ENCODE measurements at regions of chr2 and their contacts with region 1.

Region 1: DNA sequence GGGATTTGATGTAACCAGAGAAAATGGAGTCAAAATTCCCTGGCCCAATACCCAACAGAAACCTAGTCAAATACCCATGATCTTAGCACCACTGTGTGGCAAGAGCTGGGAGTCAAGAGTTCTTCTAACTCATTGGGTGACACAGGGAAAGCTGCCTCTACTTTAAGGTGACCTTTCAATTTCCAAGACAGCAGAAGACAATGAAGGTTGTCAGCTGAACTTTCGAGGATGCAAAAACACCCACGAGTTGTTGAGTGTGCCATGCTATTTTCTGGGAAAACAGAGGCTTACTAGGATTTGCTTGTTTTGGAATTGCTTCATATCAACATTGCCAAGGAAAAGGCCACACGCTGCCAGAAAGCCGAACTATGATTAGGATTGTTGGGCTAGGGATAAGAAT is 61.6 kb upstream of the CYRIA start:
- DNase-seq: peak in 1 of 10 donors; percentile 48
- H3K4me3 ChIP-seq: no peak overlapping the region
- H3K27ac ChIP-seq: peak overlapping the region in 9 of 59 donors; percentile 3 to 51 (median 27)
- H3K27me3 ChIP-seq: no peaks in the 10 kb centered on the region
- CTCF ChIP-seq: peak in 53 of 56 donors; percentile 22 to 75 (median 49)

Region 2: DNA sequence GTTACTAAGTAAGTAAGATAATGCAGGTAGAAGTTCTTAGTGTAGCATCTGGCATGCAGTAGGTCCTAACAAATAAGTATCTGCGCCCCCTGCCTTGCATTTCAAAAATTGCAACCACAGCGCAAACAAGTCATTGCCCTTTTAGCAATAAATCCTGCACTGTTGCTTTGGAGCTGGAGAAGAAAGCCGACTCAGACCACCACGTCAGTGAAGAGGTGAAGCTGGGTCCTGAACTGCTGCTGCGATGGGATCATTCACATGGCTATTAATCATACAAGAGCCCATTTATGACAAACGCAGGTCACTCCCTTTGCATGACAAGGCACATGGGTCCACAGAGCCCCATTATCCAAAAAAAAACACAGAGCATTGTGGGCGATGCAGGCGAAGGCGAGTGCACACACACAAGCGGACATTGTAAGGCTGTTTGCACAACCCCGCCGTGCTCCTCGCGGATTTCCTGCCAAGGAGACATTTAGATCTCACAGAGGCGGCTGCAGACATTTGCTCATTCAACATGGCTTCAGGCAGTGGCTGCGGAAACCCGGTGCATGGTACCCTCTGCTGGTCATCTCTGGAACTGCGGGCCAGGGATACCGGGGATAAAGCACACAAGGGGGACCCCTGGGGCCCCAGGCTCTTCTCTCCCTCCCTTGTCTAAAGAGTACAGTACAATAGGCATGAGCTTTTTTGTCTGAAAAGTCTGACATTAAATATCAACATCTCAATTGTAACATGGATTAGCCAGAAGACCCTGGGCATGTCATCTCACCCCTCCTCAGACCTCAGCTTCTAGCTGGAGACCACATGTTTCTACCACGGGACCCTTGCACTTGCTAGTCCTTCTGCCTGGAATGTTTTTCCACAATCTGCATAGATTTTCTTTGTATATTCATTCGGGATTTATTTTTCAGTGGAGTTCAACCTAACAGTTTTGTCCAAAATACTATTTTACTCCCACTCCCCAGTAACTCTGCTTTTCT is 118.3 kb before region 1 on chr2:
- intact Hi-C with region 1: loop called (anchors 2 kb)
- DNase-seq: peak; percentile 81 to 93 (median 90)
- H3K4me3 ChIP-seq: peak overlapping the region; percentile 32 to 74 (median 54)
- H3K27ac ChIP-seq: peak overlapping the region; percentile 18 to 91 (median 83)
- H3K27me3 ChIP-seq: no peaks in the 10 kb centered on the region
- CTCF ChIP-seq: peak; percentile 81 to 99 (median 93)

Region 3: DNA sequence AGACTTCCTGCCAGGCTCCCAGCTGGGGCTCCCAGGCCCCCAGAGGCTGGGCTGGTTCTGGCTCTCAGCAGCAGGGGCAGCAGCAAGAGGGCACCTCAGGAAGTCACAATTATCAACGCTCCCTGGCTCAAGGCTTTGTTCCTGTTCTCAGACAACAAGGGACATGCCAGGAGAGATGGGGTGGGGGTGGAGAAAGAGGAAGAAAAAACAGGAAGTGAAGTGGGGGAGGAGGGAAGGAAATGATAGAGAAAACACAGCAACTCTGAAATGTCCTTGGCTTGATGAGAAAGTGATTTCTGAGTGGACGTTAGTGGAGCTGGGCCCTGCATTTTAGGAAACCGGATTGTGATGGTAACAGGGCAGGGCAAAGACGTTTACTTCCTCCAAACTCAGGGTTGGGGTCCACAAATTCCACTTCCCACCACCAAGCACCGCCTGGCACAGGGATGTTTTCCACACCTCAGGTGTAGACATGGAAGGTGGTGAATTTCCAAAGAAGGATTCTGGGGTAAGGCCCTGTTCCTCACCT is 102.0 kb before region 1 on chr2:
- intact Hi-C with region 1: loop called in 1 of 2 experiments (anchors 5 kb)
- DNase-seq: no peak
- H3K4me3 ChIP-seq: no peak overlapping the region
- H3K27ac ChIP-seq: peak overlapping the region in 56 of 59 donors; percentile 8 to 84 (median 69)
- H3K27me3 ChIP-seq: no peaks in the 10 kb centered on the region
- CTCF ChIP-seq: no peak

Region 4: DNA sequence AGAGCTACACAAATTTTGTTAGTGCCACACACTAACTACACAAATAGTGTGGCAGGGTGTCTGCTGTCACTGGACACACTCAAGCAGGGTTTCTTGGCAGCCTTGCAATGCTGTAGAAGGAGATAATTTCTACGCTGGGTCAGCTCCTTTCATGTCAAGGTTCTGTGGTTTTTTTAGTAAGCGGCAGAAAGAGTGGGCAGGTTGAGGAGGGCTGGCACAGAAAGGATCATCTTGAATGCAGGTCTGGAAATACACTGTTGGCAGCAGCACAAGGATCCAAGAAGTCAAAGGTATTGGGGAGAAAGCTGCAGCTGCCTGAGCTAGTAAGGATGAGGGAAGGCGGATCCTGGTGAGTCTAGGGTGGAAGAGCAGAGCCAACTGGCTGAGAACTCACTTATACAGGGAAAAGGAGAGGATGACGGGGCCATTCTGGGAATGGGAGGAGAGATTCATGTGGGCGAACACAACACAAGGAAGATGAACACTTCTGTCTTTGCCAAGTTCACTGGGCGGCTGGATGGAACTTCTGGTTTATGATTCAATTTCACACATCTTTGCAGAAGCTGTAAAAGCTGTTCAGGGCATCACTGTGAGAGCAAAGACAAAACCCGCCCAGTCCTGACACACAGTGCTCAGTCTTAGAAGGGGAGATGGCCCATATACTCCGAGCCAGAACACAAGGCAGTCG is 44.7 kb before region 1 on chr2:
- intact Hi-C with region 1: loop called in 1 of 2 experiments (anchors 5 kb)
- DNase-seq: peak in 5 of 10 donors; percentile 35 to 81 (median 64)
- H3K4me3 ChIP-seq: no peak overlapping the region
- H3K27ac ChIP-seq: peak overlapping the region in 18 of 59 donors; percentile 4 to 77 (median 44)
- H3K27me3 ChIP-seq: no peaks in the 10 kb centered on the region
- CTCF ChIP-seq: no peak

Region 5: GRCh38 chr2:16798472-16798871 is 71.2 kb after region 1 on chr2:
- intact Hi-C with region 1: no loop called
- DNase-seq: no peak
- H3K4me3 ChIP-seq: no peak overlapping the region
- H3K27ac ChIP-seq: no peak overlapping the region
- H3K27me3 ChIP-seq: no peaks in the 10 kb centered on the region
- CTCF ChIP-seq: no peak

Region 6: GRCh38 chr2:16908656-16909055 is 181.4 kb after region 1 on chr2:
- intact Hi-C with region 1: no loop called
- DNase-seq: no peak
- H3K4me3 ChIP-seq: no peak overlapping the region
- H3K27ac ChIP-seq: no peak overlapping the region
- H3K27me3 ChIP-seq: no peaks in the 10 kb centered on the region
- CTCF ChIP-seq: no peak